Right lobe of liver (tissue), 6 donors: ENCODE measurements at regions of chr6 and their contacts with region 1.

Region 1: DNA sequence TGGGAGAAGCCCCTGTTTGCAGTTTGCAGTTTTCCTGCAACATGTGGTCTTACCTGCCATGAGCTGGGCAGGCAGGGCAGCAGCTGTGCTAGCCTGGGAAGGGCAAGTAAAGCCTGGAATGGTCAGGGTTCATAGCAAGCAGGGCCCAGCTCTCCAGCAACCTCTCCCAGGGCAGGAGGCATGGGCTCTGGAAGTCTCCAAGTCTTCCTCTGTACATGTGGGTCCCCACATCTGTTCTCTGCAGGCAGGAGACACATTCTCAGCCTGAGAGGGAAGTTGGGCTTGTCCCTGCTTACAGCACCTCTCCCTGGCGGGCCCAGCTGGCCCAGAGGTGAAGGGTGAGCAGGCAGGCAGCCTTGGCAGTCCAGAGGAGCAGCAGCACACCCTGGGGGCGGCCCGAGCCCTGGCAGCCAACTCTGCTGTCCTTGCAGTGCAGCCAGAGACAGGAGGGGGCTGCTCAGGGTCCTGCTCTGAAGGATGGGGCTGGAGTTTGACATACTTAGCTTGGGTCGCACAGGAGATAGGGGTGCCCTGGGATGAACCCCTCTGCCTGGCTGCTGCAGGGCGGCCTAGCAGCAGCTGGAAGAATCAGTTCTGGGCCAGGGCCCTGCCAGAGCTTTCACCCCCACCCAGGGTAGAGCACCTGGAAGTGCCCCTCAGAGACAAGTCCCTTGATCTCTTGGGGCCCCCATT is 176.0 kb downstream of the MRPL14 start:
- DNase-seq: peak; percentile 88 to 91 (median 89)
- ATAC-seq: peak; percentile 86 to 97 (median 94)
- H3K4me3 ChIP-seq: no peak overlapping the region
- H3K27ac ChIP-seq: peak overlapping the region in 2 of 3 donors; percentile 52 to 58
- H3K4me1 ChIP-seq: peaks cover 0 to 30% (median 8%) of the 10 kb centered on the region in 4 donors
- H3K27me3 ChIP-seq: no peaks in the 10 kb centered on the region
- CTCF ChIP-seq: peak; percentile 72 to 92 (median 78)
- POLR2A ChIP-seq: no peak

Region 2: GRCh38 chr6:43842231-43842794 is 108.9 kb before region 1 on chr6:
- intact Hi-C with region 1: no loop called
- DNase-seq: no peak
- ATAC-seq: peak in 1 of 4 donors; percentile 7
- H3K4me3 ChIP-seq: no peak overlapping the region
- H3K27ac ChIP-seq: no peak overlapping the region
- H3K4me1 ChIP-seq: peaks cover 0 to 18% (median 7%) of the 10 kb centered on the region in 4 donors
- H3K27me3 ChIP-seq: no peaks in the 10 kb centered on the region
- CTCF ChIP-seq: no peak
- POLR2A ChIP-seq: no peak

Region 3: GRCh38 chr6:43856005-43856765 is 95.0 kb before region 1 on chr6:
- intact Hi-C with region 1: loop called in 1 of 2 experiments (anchors 10 kb)
- DNase-seq: peak; percentile 76 to 80 (median 79)
- ATAC-seq: peak; percentile 88 to 94 (median 93)
- H3K4me3 ChIP-seq: no peak overlapping the region
- H3K27ac ChIP-seq: peak overlapping the region; percentile 19 to 28 (median 26)
- H3K4me1 ChIP-seq: peaks cover 0 to 21% (median 3%) of the 10 kb centered on the region in 4 donors
- H3K27me3 ChIP-seq: no peaks in the 10 kb centered on the region
- CTCF ChIP-seq: peak; percentile 55 to 85 (median 70)
- POLR2A ChIP-seq: no peak

Region 4: DNA sequence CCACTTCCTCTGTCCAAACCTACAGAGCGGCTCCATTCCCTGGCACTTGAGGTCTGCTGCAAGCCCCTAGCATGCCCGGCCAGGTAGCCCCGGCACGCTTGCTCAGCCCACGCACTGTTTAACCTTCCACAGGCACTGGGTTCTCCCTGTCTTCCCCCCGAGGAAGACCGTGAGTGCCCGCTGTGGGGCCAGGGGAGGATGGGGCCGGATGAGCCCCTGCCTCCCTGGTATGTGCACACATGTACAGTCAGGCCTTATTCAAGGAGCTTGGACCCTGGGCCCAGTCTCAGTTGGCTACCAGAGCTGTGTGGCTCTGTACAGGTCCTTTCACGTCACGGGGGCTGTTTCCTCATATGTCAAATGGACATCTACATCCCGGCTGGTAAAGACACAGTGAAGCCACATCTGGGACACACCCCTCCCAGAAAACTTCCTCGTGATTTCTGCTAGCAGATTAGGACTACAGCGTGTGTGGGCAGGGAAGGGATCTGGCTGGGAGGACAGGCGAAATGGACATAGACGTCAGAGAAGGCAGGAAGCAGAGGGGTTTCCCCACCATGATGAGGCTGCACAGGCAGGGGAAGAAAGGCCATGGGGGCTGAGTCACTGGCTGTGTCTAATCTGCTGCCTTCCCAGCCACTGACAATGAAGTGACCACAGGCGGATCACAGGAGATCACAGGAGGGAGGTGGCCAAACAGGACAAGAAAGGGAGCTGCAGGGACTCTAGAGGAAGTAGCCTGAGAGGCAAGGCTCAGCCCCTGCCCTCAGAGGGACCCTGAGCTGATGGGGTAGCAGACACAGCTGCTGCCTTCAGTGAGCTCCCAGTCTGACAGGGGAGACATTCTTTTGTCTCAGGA is 113.1 kb after region 1 on chr6:
- intact Hi-C with region 1: loop called in 1 of 2 experiments (anchors 10 kb)
- DNase-seq: peak in 1 of 3 donors; percentile 71
- ATAC-seq: peak; percentile 65 to 82 (median 72)
- H3K4me3 ChIP-seq: no peak overlapping the region
- H3K27ac ChIP-seq: peak overlapping the region in 1 of 3 donors; percentile 52
- H3K4me1 ChIP-seq: peaks cover 0 to 6% (median 0%) of the 10 kb centered on the region in 4 donors
- H3K27me3 ChIP-seq: no peaks in the 10 kb centered on the region
- CTCF ChIP-seq: no peak
- POLR2A ChIP-seq: no peak